BJ (cell line): ENCODE measurements at regions of chr18 and their contacts with region 1.

Region 1: DNA sequence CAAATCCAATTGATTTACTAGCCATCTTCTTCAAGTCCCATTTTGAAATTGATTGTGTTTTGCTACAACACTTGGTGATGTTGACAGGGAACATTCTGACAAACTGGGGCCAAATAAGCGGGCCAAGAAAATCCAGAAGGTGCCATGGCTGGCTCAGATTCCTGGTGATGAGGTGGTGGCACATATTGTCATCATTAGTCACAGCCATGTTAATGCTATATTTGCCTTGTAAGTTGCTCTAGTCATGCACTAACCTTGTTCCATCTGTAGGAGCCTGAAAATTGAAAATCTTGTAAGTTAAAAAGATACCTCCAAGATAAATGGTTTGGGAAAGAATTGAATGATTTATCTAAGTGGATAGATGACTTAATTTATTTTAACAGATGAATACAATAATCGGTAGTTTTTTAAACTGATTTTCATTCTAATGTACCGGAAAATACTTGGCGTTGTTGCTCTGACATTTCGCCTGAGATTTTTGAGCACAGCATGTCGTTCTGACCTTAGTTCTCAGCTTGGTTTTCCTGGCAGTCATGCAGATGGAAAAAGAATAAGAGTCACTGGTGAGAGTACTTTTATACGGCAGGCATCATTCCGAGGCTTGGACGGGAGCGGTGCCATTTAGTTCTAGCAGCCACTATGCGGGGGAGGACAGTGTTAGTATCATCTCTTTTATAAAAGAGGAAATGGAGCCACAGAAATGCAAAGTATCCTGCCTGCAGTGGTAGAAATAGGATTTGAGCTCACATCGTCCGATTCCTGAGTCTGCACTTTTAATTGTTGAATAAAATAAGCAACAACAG is 133.9 kb downstream of the ZNF532 start:
- DNase-seq: peak; percentile 73
- H3K4me3 ChIP-seq: no peak overlapping the region
- H3K27me3 ChIP-seq: no peaks in the 10 kb centered on the region
- CTCF ChIP-seq: no peak

Region 2: DNA sequence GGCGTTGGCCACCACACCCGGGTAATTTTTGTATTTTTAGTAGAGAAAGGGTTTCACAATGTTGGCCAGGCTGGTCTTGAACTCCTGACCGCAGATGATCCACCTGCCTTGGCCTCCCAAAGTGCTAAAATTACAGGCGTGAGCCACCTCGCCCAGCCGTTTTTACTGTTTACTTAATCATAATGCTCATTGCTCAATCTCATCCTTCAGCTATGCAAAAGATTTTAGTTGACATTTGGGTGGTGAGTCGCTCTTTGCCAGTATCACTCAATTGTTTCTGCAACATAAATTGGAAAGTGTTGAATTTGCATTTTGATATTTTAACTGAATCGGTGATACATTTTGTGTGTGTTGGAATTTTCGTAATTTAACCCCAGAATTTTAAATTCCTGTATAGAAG is 141.7 kb before region 1 on chr18:
- CTCF ChIA-PET with region 1: no interaction called
- POLR2A ChIA-PET with region 1: no interaction called
- DNase-seq: no peak
- H3K4me3 ChIP-seq: no peak overlapping the region
- H3K27me3 ChIP-seq: no peaks in the 10 kb centered on the region
- CTCF ChIP-seq: no peak

Region 3: GRCh38 chr18:58953627-58954026 is 45.0 kb before region 1 on chr18:
- CTCF ChIA-PET with region 1: no interaction called
- POLR2A ChIA-PET with region 1: interaction called, 10 read pairs
- DNase-seq: no peak
- H3K4me3 ChIP-seq: no peak overlapping the region
- H3K27me3 ChIP-seq: no peaks in the 10 kb centered on the region
- CTCF ChIP-seq: no peak